Activated CD8-positive, alpha-beta T cell treated with anti-CD3 and anti-CD28 coated beads, Interleukin-2, amount 10 ng/mL, durations not matched to agents 7 days and 5 days (primary cell): ENCODE measurements at regions of chr3 and their contacts with region 1.

Region 1: GRCh38 chr3:53195602-53196574 is 34.9 kb downstream of the PRKCD start:
- DNase-seq: peak; percentile 60
- ATAC-seq: peak; percentile 74
- H3K4me3 Mint-ChIP-seq: no peak overlapping the region
- H3K27ac Mint-ChIP-seq: no peak overlapping the region
- H3K4me1 Mint-ChIP-seq: peaks cover 20% of the 10 kb centered on the region
- H3K27me3 Mint-ChIP-seq: peaks cover 4% of the 10 kb centered on the region

Region 2: GRCh38 chr3:52645549-52645948 is 550.3 kb before region 1 on chr3:
- CTCF ChIA-PET with region 1: no interaction called
- POLR2A ChIA-PET with region 1: no interaction called
- DNase-seq: no peak
- ATAC-seq: no peak
- H3K4me3 Mint-ChIP-seq: no peak overlapping the region
- H3K27ac Mint-ChIP-seq: no peak overlapping the region
- H3K4me1 Mint-ChIP-seq: peaks cover 3% of the 10 kb centered on the region
- H3K27me3 Mint-ChIP-seq: no peaks in the 10 kb centered on the region

Region 3: GRCh38 chr3:53130179-53131061 is 65.5 kb before region 1 on chr3 and contains the start of gene RFT1:
- CTCF ChIA-PET with region 1: interaction called, 106 read pairs
- POLR2A ChIA-PET with region 1: no interaction called
- DNase-seq: peak; percentile 99
- ATAC-seq: peak; percentile 95
- H3K4me3 Mint-ChIP-seq: peak within 1 kb of the TSS; percentile 82
- H3K27ac Mint-ChIP-seq: peak within 1 kb of the TSS; percentile 89
- H3K4me1 Mint-ChIP-seq: peaks cover 26% of the 10 kb centered on the region
- H3K27me3 Mint-ChIP-seq: no peaks in the 10 kb centered on the region
- total RNA-seq, gene RFT1: 31.7 to 32.3 TPM

Region 4: DNA sequence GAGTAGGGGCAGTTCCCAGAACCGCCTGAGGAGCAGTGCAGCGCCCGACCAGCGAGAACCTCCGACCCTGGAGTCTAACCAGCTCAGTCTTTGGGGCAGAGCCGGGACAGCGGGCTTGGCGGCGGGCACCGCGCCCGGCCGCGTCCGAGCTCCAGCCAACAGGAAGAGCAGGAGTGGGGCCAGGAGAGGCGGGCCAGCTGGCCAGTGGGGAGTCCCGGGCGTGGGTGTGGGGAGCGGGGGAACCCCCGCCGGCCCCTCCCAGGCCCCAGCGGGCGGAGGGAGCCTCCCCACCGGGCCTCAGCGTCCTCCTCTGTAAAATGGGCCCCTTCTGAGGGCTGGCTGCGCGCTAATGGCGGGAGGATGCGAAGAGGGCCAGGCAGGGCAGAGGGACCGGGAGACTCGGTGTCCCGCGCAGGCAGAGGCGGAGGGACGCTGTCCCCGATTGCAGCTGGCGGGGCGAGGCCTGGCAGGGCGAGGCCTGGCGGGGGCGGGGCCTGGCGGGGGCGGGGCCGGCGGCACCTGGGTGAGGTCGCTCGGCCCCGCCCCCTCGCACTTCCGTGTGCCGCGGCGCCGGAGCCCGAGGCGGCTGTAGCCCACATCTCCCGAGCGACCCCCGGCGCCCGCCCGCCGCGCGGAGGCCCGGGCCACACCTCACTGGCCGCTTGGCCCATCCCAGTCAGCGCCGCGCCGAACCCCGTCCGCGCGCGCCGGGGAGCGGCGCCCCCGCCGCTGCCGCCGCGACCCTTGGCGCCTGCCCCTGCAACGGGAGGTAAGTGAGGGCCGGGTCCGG is 35.0 kb before region 1 on chr3 and contains the start of gene PRKCD:
- CTCF ChIA-PET with region 1: interaction called, 13 read pairs
- POLR2A ChIA-PET with region 1: no interaction called
- DNase-seq: peak; percentile 83
- ATAC-seq: peak; percentile 86
- H3K4me3 Mint-ChIP-seq: peak within 1 kb of the TSS; percentile 73
- H3K27ac Mint-ChIP-seq: peak within 1 kb of the TSS; percentile 82
- H3K4me1 Mint-ChIP-seq: peaks cover 22% of the 10 kb centered on the region
- H3K27me3 Mint-ChIP-seq: peaks cover 33% of the 10 kb centered on the region
- total RNA-seq, gene PRKCD: 19.5 to 20.5 TPM

Region 5: GRCh38 chr3:53170325-53171063 is 25.4 kb before region 1 on chr3:
- CTCF ChIA-PET with region 1: interaction called, 11 read pairs
- POLR2A ChIA-PET with region 1: no interaction called
- DNase-seq: peak; percentile 56
- ATAC-seq: peak; percentile 19
- H3K4me3 Mint-ChIP-seq: no peak overlapping the region
- H3K27ac Mint-ChIP-seq: peak overlapping the region; percentile 49
- H3K4me1 Mint-ChIP-seq: peaks cover 54% of the 10 kb centered on the region
- H3K27me3 Mint-ChIP-seq: no peaks in the 10 kb centered on the region

Region 6: GRCh38 chr3:53219895-53220483 is 24.1 kb after region 1 on chr3:
- CTCF ChIA-PET with region 1: interaction called, 11 read pairs
- POLR2A ChIA-PET with region 1: no interaction called
- DNase-seq: peak; percentile 90
- ATAC-seq: peak; percentile 98
- H3K4me3 Mint-ChIP-seq: no peak overlapping the region
- H3K27ac Mint-ChIP-seq: no peak overlapping the region
- H3K4me1 Mint-ChIP-seq: peaks cover 5% of the 10 kb centered on the region
- H3K27me3 Mint-ChIP-seq: peaks cover 3% of the 10 kb centered on the region